ENCODE measurements at regions of chr7 and their contacts with region 1.

Region 1: DNA sequence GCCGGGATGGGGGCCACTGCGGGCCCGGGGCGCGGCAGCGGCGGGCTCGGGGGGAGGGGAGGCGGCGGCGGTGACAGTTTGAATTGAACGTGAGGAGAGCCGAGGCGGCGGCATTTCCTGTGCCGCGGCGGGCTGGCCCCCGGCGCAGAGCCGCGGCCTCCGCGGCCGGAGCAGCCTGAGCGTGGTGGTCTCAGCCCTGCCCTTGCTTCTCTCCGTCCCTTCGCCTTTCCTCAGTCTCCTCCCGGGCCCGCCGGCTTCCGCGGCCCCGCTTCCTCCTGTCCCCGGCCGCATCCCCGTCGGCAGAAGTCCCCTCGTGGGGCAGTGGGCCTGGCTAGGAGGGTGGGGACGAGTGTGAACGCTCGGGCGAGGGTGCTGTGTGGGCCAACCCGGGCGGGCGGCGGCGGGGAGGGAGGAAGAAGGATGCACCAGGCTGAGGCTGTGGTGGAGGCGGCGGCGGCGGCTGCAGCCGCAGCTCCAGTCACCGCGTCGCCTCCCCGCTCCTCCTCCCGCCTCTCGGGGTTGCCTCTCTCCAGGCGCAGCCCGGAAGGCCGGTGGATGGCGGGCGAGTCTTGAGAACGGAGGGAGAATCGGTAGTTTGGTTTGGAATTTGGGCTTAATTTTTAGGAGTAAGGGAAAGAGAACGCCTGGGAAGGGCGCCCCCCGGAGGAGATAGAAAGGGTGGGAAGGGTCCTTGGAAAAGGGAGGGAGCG is 690 bp downstream of the SEPTIN7 start:
- DNase-seq: peak; percentile 73
- ATAC-seq: peak; percentile 35
- H3K4me3 Mint-ChIP-seq: peak overlapping the region; percentile 96
- H3K27ac Mint-ChIP-seq: peak overlapping the region; percentile 99
- H3K4me1 Mint-ChIP-seq: peaks cover 57% of the 10 kb centered on the region
- H3K27me3 Mint-ChIP-seq: no peaks in the 10 kb centered on the region
- CTCF ChIP-seq: no peak

Region 2: DNA sequence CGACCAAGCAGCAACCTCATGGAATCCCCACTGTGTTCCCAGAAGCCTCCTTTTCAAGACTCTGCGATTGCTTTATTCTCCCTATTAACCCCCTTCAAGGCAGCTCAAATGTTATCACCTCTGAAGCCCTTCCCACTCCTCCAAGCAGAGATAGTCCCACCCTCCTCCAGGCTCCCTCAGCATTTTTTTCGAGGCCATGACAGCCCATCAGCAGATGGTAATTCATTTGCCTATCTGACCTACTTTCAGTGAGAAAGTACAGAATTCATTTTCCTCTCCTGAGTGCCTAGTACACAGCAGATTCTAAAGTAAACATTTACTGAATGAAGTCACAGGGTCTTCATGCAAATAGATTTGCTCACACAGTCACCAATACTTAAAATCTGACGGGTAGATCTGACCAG is 154.4 kb before region 1 on chr7:
- CTCF ChIA-PET with region 1: no interaction called
- POLR2A ChIA-PET with region 1: no interaction called
- intact Hi-C with region 1: no loop called
- DNase-seq: no peak
- ATAC-seq: no peak
- H3K4me3 Mint-ChIP-seq: peak overlapping the region; percentile 20
- H3K27ac Mint-ChIP-seq: no peak overlapping the region
- H3K4me1 Mint-ChIP-seq: peaks cover 42% of the 10 kb centered on the region
- H3K27me3 Mint-ChIP-seq: no peaks in the 10 kb centered on the region
- CTCF ChIP-seq: no peak

Region 3: DNA sequence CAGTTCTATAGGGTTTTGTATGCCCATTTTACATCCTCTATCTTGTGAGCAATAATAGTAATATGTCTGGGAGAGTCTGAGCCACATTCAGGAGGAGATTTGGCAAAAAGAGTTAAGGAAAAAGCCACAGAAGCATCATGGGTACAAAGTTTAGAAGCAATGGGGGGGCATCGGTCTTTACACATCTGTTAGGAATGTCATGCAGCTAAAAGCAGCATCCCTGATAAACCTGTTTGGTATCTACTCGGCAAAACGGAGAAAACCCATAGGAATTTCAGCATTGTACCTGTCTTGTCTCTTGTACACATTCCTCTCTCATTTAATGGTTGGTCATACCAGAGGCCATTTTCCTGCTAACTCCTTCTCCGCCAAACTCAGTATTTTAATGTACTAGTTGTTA is 94.1 kb before region 1 on chr7:
- CTCF ChIA-PET with region 1: interaction called, 36 read pairs
- POLR2A ChIA-PET with region 1: interaction called, 45 read pairs
- intact Hi-C with region 1: loop called (anchors 1 kb)
- DNase-seq: no peak
- ATAC-seq: no peak
- H3K4me3 Mint-ChIP-seq: no peak overlapping the region
- H3K27ac Mint-ChIP-seq: no peak overlapping the region
- H3K4me1 Mint-ChIP-seq: peaks cover 11% of the 10 kb centered on the region
- H3K27me3 Mint-ChIP-seq: no peaks in the 10 kb centered on the region
- CTCF ChIP-seq: no peak

Region 4: DNA sequence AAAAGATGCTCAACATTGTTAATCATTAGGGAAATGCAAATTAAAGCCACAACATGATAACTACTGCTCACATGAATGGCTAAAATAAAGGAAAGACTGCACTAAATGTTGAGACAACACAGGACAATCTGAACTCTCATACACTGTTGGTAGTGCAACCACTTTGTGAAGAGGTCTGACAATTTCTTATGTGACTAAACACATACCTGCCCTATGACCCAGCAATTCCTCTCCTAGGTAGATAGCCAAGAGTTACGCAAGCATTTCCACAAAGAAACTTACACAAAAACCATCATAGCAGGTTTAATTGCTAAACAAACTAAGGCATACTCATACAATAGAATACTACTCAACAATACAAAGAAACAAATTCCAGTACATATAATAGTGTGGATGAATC is 64.8 kb before region 1 on chr7:
- CTCF ChIA-PET with region 1: no interaction called
- POLR2A ChIA-PET with region 1: interaction called, 442 read pairs
- intact Hi-C with region 1: no loop called
- DNase-seq: no peak
- ATAC-seq: no peak
- H3K4me3 Mint-ChIP-seq: no peak overlapping the region
- H3K27ac Mint-ChIP-seq: no peak overlapping the region
- H3K4me1 Mint-ChIP-seq: peaks cover 21% of the 10 kb centered on the region
- H3K27me3 Mint-ChIP-seq: no peaks in the 10 kb centered on the region
- CTCF ChIP-seq: no peak

Region 5: DNA sequence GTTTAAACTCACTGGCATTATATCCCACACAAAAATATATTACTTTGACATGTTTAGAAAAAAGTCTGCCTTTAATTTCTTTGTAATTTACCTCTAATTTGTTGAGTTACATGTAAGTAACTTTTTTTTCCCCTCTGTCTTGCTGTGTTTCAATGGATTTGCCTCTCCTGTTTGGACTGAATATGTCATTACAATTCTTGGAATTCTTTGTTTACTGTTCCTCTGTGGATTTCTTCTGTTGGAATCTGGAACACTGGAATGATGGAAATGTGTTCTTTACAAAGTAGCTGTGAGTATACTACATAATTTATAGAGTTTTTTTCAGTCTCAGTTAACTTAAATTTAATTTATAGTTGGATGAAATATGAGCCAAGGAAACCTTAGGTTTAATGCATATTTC is 29.7 kb after region 1 on chr7:
- CTCF ChIA-PET with region 1: interaction called, 3 read pairs
- POLR2A ChIA-PET with region 1: interaction called, 7 read pairs
- intact Hi-C with region 1: loop called (anchors 2 kb)
- DNase-seq: no peak
- ATAC-seq: no peak
- H3K4me3 Mint-ChIP-seq: no peak overlapping the region
- H3K27ac Mint-ChIP-seq: no peak overlapping the region
- H3K4me1 Mint-ChIP-seq: peaks cover 56% of the 10 kb centered on the region
- H3K27me3 Mint-ChIP-seq: no peaks in the 10 kb centered on the region
- CTCF ChIP-seq: no peak

Region 6: DNA sequence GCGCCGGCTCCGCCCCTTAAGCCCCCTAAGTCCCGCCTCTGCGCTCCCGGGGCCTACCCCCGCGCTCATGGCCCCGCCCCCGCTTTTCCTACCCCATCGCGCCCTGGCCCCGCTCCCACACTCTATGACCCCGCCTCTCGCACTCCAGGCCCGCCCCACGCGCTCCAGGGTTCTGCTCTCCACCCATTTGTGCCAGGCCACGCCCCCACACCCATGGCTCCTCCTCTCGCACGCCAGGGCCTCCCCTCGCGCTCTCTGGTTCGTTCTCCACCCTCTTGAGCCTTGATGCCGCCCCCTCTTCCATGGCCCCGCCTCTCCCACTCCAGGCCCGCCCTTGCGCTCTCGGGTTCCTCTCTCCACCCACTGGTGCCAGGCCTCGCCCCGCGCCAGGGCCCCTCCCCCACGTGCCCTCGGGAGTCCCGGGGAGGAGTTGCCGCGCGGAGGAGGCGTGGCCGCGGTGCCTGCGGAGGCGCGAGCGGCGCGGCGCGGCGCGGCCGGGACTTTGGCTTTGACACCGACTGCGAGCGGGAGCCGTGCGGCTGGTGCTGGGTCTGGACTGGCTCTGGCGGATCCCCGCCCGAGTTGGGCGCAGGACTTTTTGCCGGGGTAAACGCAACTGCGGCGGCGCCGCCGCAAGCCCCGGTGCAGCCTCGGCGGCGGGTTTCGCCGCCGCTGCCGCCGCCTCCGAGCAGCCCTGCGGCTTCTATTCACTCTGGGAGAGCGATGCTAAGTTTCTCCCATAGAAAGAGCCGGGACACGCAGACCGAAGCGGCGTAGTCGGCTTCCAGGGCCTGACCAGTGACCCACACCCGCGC is 351.4 kb after region 1 on chr7 and contains the start of gene EEPD1:
- CTCF ChIA-PET with region 1: no interaction called
- POLR2A ChIA-PET with region 1: no interaction called
- intact Hi-C with region 1: loop called (anchors 1 kb)
- DNase-seq: peak; percentile 100
- ATAC-seq: peak; percentile 92
- H3K4me3 Mint-ChIP-seq: peak within 1 kb of the TSS; percentile 80
- H3K27ac Mint-ChIP-seq: no peak within 1 kb of the TSS
- H3K4me1 Mint-ChIP-seq: peaks cover 11% of the 10 kb centered on the region
- H3K27me3 Mint-ChIP-seq: peaks cover 3% of the 10 kb centered on the region
- CTCF ChIP-seq: no peak
- total RNA-seq, gene EEPD1: 0.59 and 0.64 TPM in 2 replicates

Region 7: GRCh38 chr7:36473454-36474282 is 672.1 kb after region 1 on chr7:
- CTCF ChIA-PET with region 1: no interaction called
- POLR2A ChIA-PET with region 1: no interaction called
- intact Hi-C with region 1: no loop called
- DNase-seq: no peak
- ATAC-seq: no peak
- H3K4me3 Mint-ChIP-seq: no peak overlapping the region
- H3K27ac Mint-ChIP-seq: no peak overlapping the region
- H3K4me1 Mint-ChIP-seq: no peaks in the 10 kb centered on the region
- H3K27me3 Mint-ChIP-seq: peaks cover 3% of the 10 kb centered on the region
- CTCF ChIP-seq: no peak